Activated CD8-positive, alpha-beta memory T cell treated with anti-CD3 and anti-CD28 coated beads, Interleukin-2, amount 10 ng/mL, durations not matched to agents 7 days and 5 days (primary cell): ENCODE measurements at regions of chr2 and their contacts with region 1.

Region 1: DNA sequence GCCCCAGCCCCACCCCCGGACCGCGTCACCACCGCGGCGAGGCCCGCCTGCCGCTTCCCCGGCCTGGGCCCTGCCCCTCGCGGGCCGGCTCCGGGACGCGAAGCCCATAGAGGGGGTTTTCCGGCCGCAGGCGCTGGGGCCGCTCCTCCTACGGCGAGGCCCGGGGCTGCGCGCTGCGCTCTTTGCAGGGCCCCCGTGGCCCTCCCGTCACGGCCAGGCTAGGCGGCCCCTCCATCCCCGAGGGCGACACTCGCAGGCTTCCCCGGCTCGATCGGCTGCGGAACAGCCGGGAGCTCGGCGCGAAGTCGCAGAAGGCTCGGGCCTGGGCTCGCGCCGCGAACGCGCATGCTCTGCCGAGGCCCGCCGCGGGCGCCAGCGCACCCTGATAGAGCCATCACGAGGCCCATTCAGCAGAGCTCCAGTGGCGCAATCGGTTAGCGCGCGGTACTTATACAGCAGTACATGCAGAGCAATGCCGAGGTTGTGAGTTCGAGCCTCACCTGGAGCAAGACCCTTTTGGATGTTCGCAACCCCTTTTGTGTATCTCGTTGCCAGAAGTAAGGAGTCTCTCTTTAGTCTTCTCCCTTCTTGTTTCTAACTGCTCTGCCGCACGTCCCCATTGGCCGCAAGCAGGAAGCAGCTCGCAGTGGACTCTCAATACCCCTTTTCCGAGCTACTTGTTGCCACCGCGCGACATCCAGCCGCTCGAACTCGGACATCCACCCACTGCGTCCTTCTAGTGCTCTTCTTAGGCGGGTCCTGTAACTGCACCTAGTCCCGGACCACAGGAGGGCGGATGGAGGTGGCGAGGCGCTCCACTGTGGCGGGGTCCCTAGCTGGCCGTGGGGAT is 18.0 kb upstream of the HAAO start:
- DNase-seq: peak; percentile 97
- ATAC-seq: peak; percentile 82
- H3K4me3 Mint-ChIP-seq: peak overlapping the region; percentile 88
- H3K27ac Mint-ChIP-seq: peak overlapping the region; percentile 95
- H3K4me1 Mint-ChIP-seq: peaks cover 21% of the 10 kb centered on the region
- H3K27me3 Mint-ChIP-seq: peaks cover 3% of the 10 kb centered on the region

Region 2: DNA sequence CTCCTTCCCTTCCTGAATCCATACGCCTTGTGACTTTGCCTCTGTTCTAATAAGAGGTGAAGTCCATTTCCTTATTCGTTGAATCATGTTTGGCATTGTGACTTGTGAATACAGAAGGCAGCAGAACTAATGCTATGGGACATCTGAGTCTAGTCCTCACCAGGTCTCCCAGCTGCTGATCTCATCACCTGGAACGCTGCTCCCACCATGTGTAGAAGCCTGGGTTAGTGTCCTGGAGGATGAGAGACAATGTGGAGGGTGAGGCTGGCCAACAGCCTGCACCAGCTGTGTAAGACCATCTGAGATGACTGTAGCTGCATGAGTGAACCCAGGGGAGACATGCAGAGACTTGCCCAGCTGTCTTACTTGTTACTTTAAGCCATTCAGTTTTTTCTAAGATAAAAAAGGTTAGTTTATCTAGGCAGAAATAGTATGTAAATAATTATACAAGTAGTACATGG is 14.5 kb before region 1 on chr2:
- CTCF ChIA-PET with region 1: interaction called, 11 read pairs
- DNase-seq: no peak
- ATAC-seq: no peak
- H3K4me3 Mint-ChIP-seq: no peak overlapping the region
- H3K27ac Mint-ChIP-seq: no peak overlapping the region
- H3K4me1 Mint-ChIP-seq: peaks cover 31% of the 10 kb centered on the region
- H3K27me3 Mint-ChIP-seq: peaks cover 30% of the 10 kb centered on the region

Region 3: DNA sequence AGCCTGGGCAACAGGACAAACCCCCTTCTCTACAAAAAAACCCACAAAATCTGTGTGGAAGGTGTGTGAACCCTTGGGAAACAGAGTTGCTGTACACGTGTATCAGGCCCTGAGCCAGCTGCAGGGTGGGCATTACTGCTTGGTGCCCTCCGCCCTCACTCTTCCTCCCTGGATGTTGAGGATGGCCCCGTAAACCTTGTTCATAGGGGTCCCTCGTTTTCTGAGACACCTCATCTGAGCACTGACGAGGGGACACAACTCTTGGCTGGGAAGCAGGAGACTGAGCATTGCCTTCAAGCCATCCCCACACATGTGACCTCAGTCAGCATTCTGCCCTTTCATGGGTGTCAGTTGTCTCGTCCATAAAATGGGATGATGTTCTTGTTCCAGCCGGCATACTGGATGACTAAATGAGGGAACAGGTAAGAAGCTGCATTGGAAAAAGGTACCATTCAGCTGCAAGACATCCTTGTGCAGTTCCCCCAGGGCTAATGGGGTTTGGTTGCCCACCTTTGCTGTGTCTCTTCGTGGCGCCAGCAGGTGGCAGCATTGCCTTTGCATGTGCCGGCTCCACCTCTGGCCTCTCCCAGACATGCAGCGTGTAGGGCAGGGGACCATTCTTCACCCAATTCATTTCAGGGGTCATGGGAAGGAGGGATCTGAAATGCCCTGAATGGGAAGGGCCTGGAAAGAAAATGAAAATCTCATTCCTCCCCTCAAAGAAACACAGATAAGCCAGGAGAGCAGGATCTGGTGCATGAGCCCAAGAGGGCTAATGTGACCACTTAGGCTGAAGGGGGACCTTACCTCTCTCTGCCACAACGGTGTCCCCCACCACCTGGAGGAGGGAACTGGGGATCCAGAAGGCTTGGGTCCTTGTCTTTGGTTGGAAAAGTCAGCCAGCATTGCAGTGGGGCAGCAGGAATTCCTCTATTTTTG is 18.4 kb after region 1 on chr2:
- CTCF ChIA-PET with region 1: interaction called, 23 read pairs
- DNase-seq: peak; percentile 77
- ATAC-seq: peak; percentile 95
- H3K4me3 Mint-ChIP-seq: no peak overlapping the region
- H3K27ac Mint-ChIP-seq: no peak overlapping the region
- H3K4me1 Mint-ChIP-seq: peaks cover 16% of the 10 kb centered on the region
- H3K27me3 Mint-ChIP-seq: peaks cover 13% of the 10 kb centered on the region